ENCODE measurements at regions of chr1 and their contacts with region 1.

Region 1: DNA sequence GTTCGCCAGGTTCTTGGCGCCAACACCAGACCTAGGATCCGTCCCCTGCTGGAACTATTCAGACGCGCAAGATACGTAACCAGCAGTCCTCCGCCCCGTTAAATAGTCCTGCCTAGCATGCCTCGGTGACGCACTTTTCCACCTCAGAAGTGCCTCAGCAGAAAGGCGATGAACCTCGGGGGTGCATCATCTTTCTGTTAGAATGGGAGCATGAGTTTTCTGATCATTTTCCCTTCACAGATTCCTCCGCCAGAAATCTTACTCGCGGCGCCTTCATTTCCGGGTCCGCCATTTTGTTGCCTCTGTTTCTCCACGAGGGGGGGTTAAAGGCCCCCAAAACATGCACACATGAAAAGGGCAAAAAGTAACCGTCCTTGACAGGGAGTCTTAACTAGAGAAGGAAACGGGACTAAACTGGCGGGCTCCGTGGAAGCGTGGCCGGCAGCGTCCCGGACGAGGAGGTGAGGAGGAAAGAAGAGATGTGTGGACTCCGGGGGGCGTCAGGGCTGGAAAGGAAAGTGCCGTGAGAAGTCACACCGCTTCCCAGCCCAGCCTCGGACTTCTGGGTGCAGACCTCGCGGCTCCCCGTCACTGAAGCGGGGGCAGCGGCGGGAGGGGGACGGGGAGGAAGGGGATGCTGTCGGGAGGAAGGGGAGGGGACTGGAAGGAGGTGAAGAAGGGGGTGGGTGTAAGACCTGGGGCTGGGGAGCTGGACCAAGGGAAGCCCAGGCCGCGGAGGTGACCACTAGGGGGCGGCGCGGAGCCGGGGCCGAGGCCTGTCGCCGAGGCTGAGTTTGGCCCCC is at the start of gene GABPB2:
- DNase-seq: peak; percentile 94 to 96 (median 95)
- H3K4me3 ChIP-seq: peak within 1 kb of the TSS; percentile 57 to 99 (median 94)
- H3K27ac ChIP-seq: peak within 1 kb of the TSS; percentile 90 to 96
- H3K4me1 ChIP-seq: peaks cover 0 to 18% (median 16%) of the 10 kb centered on the region in 4 experiments
- H3K27me3 ChIP-seq: no peaks in the 10 kb centered on the region

Region 2: GRCh38 chr1:151059078-151059907 is 11.4 kb before region 1 on chr1 and contains the start of gene CDC42SE1:
- CTCF ChIA-PET with region 1: interaction called, 17 read pairs
- POLR2A ChIA-PET with region 1: interaction called, 19 read pairs
- DNase-seq: peak; percentile 92 to 96 (median 94)
- H3K4me3 ChIP-seq: peak within 1 kb of the TSS; percentile 66 to 98 (median 95)
- H3K27ac ChIP-seq: peak within 1 kb of the TSS; percentile 79 to 93
- H3K4me1 ChIP-seq: peaks cover 18 to 60% (median 53%) of the 10 kb centered on the region in 4 experiments
- H3K27me3 ChIP-seq: no peaks in the 10 kb centered on the region

Region 3: GRCh38 chr1:151085953-151086559 is 15.4 kb after region 1 on chr1:
- CTCF ChIA-PET with region 1: interaction called, 15 read pairs
- POLR2A ChIA-PET with region 1: interaction called, 4 read pairs
- DNase-seq: no peak
- H3K4me3 ChIP-seq: no peak overlapping the region
- H3K27ac ChIP-seq: no peak overlapping the region
- H3K4me1 ChIP-seq: peaks cover 0 to 7% (median 3%) of the 10 kb centered on the region in 4 experiments
- H3K27me3 ChIP-seq: no peaks in the 10 kb centered on the region